ENCODE measurements at regions of chr11 and their contacts with region 1.

Region 1: DNA sequence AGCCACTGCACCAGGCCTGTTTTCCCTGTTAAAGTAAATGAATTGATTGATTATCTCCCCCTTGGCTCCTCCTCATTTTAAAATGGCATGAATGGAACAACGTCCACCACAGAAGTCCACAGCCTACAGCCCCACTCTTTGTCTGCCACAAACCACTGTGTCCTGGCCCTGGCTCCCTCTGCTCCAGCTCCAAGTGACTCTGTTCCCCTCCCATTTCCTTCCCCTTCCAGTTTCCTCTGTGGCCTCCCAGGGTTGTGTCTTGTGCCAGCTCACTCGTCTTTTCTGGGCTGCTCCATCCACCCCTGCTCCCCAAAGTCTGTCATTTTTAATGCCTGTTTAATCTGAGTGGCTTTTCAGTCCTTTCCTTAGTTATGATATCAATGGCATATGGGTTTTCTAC is 52.4 kb upstream of the CD5 start:
- DNase-seq: no peak
- H3K4me3 Mint-ChIP-seq: peak overlapping the region; percentile 57
- H3K27ac Mint-ChIP-seq: peak overlapping the region; percentile 82
- H3K4me1 Mint-ChIP-seq: peaks cover 68% of the 10 kb centered on the region
- H3K27me3 Mint-ChIP-seq: no peaks in the 10 kb centered on the region

Region 2: GRCh38 chr11:60169264-60169915 is 880.5 kb before region 1 on chr11:
- intact Hi-C with region 1: no loop called
- DNase-seq: no peak
- H3K4me3 Mint-ChIP-seq: no peak overlapping the region
- H3K27ac Mint-ChIP-seq: no peak overlapping the region
- H3K4me1 Mint-ChIP-seq: peaks cover 2% of the 10 kb centered on the region
- H3K27me3 Mint-ChIP-seq: no peaks in the 10 kb centered on the region

Region 3: GRCh38 chr11:61075891-61076290 is 26.0 kb after region 1 on chr11:
- intact Hi-C with region 1: loop called (anchors 1 kb)
- DNase-seq: peak; percentile 73
- H3K4me3 Mint-ChIP-seq: peak overlapping the region; percentile 57
- H3K27ac Mint-ChIP-seq: peak overlapping the region; percentile 71
- H3K4me1 Mint-ChIP-seq: peaks cover 76% of the 10 kb centered on the region
- H3K27me3 Mint-ChIP-seq: no peaks in the 10 kb centered on the region

Region 4: GRCh38 chr11:61111786-61112517 is 62.1 kb after region 1 on chr11:
- intact Hi-C with region 1: no loop called
- DNase-seq: peak; percentile 92
- H3K4me3 Mint-ChIP-seq: no peak overlapping the region
- H3K27ac Mint-ChIP-seq: peak overlapping the region; percentile 90
- H3K4me1 Mint-ChIP-seq: peaks cover 91% of the 10 kb centered on the region
- H3K27me3 Mint-ChIP-seq: no peaks in the 10 kb centered on the region

Measured in activated CD4-positive, alpha-beta T cell treated with anti-CD3 and anti-CD28 coated beads, Interleukin-2, amount 10 ng/mL, durations not matched to agents 24 days and 14 days (primary cell).